CD8-positive, alpha-beta T cell (primary cell): ENCODE measurements at regions of chr5 and their contacts with region 1.

Region 1: GRCh38 chr5:127072861-127073846 is at the start of gene C5orf63:
- DNase-seq: peak; percentile 45 to 84 (median 59)
- ATAC-seq: peak; percentile 93
- H3K4me3 ChIP-seq: peak within 1 kb of the TSS; percentile 67 to 73
- H3K4me3 Mint-ChIP-seq: peak within 1 kb of the TSS; percentile 89
- H3K27ac ChIP-seq: peak within 1 kb of the TSS; percentile 62 to 68
- H3K27ac Mint-ChIP-seq: peak within 1 kb of the TSS; percentile 96
- H3K4me1 ChIP-seq: peaks cover 5% of the 10 kb centered on the region
- H3K4me1 Mint-ChIP-seq: peaks cover 26% of the 10 kb centered on the region
- H3K27me3 ChIP-seq: no peaks in the 10 kb centered on the region
- H3K27me3 Mint-ChIP-seq: no peaks in the 10 kb centered on the region
- CTCF ChIP-seq: no peak
- total RNA-seq, gene C5orf63: 4.8 TPM

Region 2: GRCh38 chr5:126852091-126852571 is 221.0 kb before region 1 on chr5:
- CTCF ChIA-PET with region 1: interaction called, 4 read pairs
- POLR2A ChIA-PET with region 1: interaction called, 10 read pairs
- intact Hi-C with region 1: loop called in 1 of 2 experiments (anchors 5 kb)
- DNase-seq: peak in 5 of 9 experiments; percentile 19 to 65 (median 48)
- ATAC-seq: peak; percentile 70
- H3K4me3 ChIP-seq: peak overlapping the region; percentile 1 to 47
- H3K4me3 Mint-ChIP-seq: peak overlapping the region; percentile 88
- H3K27ac ChIP-seq: peak overlapping the region; percentile 56 to 59
- H3K27ac Mint-ChIP-seq: peak overlapping the region; percentile 98
- H3K4me1 ChIP-seq: peaks cover 38% of the 10 kb centered on the region
- H3K4me1 Mint-ChIP-seq: peaks cover 70% of the 10 kb centered on the region
- H3K27me3 ChIP-seq: no peaks in the 10 kb centered on the region
- H3K27me3 Mint-ChIP-seq: no peaks in the 10 kb centered on the region
- CTCF ChIP-seq: no peak

Region 3: GRCh38 chr5:127060470-127060985 is 12.6 kb before region 1 on chr5:
- CTCF ChIA-PET with region 1: no interaction called
- POLR2A ChIA-PET with region 1: interaction called, 16 read pairs
- intact Hi-C with region 1: no loop called
- DNase-seq: no peak
- ATAC-seq: no peak
- H3K4me3 ChIP-seq: no peak overlapping the region
- H3K4me3 Mint-ChIP-seq: no peak overlapping the region
- H3K27ac ChIP-seq: no peak overlapping the region
- H3K27ac Mint-ChIP-seq: peak overlapping the region; percentile 15
- H3K4me1 ChIP-seq: no peaks in the 10 kb centered on the region
- H3K4me1 Mint-ChIP-seq: peaks cover 3% of the 10 kb centered on the region
- H3K27me3 ChIP-seq: no peaks in the 10 kb centered on the region
- H3K27me3 Mint-ChIP-seq: no peaks in the 10 kb centered on the region
- CTCF ChIP-seq: no peak